AG04450 (cell line): ENCODE measurements at regions of chr3 and their contacts with region 1.

Region 1: GRCh38 chr3:127574880-127575878 is 15.4 kb downstream of the TPRA1 start:
- DNase-seq: peak; percentile 74
- H3K4me3 ChIP-seq: no peak overlapping the region
- H3K27ac ChIP-seq: peak overlapping the region; percentile 80
- H3K27me3 ChIP-seq: no peaks in the 10 kb centered on the region
- CTCF ChIP-seq: peak; percentile 97

Region 2: GRCh38 chr3:127473244-127474024 is 101.7 kb before region 1 on chr3:
- CTCF ChIA-PET with region 1: no interaction called
- POLR2A ChIA-PET with region 1: no interaction called
- DNase-seq: no peak
- H3K4me3 ChIP-seq: no peak overlapping the region
- H3K27ac ChIP-seq: no peak overlapping the region
- H3K27me3 ChIP-seq: peaks cover 2% of the 10 kb centered on the region
- CTCF ChIP-seq: no peak

Region 3: GRCh38 chr3:127544192-127544802 is 30.9 kb before region 1 on chr3:
- CTCF ChIA-PET with region 1: interaction called, 23 read pairs
- POLR2A ChIA-PET with region 1: no interaction called
- DNase-seq: peak; percentile 6
- H3K4me3 ChIP-seq: no peak overlapping the region
- H3K27ac ChIP-seq: no peak overlapping the region
- H3K27me3 ChIP-seq: peaks cover 35% of the 10 kb centered on the region
- CTCF ChIP-seq: peak; percentile 76

Region 4: DNA sequence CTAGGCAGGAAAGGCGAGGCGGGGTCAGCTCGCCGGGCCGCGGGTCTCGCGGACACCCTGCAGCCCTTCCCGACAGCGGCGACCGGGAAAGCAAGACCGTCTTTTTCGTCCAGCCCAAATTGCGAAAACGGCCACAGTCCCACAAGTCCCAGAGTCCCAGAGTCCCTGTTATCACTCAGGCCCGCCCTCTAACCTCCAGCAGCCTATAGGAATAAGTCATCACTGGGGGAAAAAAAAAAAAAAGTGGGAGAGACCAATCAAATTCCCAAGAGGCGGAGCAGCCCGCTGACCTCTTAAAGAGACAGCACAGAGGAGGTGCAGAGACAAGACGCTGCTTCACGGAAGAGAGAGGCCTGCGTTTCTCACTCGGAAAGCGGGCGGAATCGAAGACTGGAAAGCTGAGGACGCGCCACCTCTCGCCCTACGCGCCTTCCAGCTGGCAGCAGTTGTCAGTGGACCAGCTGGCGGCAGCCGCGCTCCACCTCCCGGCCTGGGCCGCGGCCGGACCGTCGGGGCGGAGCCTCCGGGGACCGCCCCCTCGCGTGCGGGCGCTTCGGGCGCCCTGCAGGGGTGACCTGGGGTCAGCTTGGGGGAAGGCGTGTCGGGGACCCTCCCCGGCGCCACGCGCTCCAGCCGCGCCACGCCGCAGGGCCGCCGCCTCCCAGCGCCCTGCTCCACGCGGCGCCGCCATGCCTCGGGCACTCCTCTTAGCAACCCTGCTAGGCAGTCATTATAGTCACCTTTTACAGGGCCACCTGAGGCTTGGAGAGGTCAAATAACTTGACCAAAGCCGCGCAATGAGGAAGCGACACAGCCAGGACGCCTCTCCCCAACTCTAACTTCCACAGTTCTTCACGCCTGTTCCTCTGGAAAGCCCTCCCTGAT is 15.7 kb after region 1 on chr3 and contains the start of gene TPRA1:
- CTCF ChIA-PET with region 1: interaction called, 67 read pairs
- POLR2A ChIA-PET with region 1: interaction called, 6 read pairs
- DNase-seq: peak; percentile 91
- H3K4me3 ChIP-seq: peak within 1 kb of the TSS; percentile 81
- H3K27ac ChIP-seq: peak within 1 kb of the TSS; percentile 93
- H3K27me3 ChIP-seq: no peaks in the 10 kb centered on the region
- CTCF ChIP-seq: no peak
- polyA plus RNA-seq, gene TPRA1: 20.6 and 29.7 TPM in 2 replicates

Region 5: GRCh38 chr3:127598841-127599570 is 23.8 kb after region 1 on chr3:
- CTCF ChIA-PET with region 1: interaction called, 16 read pairs
- POLR2A ChIA-PET with region 1: interaction called, 4 read pairs
- DNase-seq: no peak
- H3K4me3 ChIP-seq: peak overlapping the region; percentile 67
- H3K27ac ChIP-seq: no peak overlapping the region
- H3K27me3 ChIP-seq: no peaks in the 10 kb centered on the region
- CTCF ChIP-seq: no peak

Region 6: DNA sequence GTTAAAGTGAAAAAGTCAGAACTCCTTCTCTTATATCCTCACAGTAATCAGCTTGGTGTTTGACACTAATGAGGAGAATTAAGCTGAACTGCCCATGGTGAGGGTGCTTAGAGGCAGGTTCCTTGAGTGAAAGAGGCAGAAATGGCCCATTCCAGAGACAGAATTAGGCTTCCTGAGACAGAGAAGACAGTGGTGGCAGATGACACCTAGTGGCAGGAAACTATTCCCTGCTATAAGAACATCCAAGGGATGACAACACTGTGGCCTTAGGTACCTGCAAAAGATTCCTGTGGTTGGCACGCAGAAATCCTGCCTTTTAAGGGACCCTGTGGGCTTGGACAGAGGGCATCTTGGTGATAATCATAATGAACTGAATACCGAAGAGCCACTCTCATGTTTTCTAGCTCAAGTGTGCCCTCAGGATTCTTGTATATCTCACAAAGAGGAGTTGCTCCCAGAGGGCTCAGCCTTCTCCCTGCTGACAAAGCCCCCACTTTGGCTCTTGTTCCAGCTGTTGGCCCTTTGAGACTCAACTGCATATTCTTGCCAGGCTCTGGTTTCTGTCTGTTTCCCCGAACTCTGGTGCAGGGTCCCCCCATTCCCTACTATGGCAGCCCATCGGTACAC is 395.9 kb after region 1 on chr3:
- CTCF ChIA-PET with region 1: interaction called, 12 read pairs
- POLR2A ChIA-PET with region 1: no interaction called
- DNase-seq: peak; percentile 18
- H3K4me3 ChIP-seq: no peak overlapping the region
- H3K27ac ChIP-seq: no peak overlapping the region
- H3K27me3 ChIP-seq: peaks cover 39% of the 10 kb centered on the region
- CTCF ChIP-seq: peak; percentile 76